ENCODE measurements at regions of chr1 and their contacts with region 1.

Region 1: DNA sequence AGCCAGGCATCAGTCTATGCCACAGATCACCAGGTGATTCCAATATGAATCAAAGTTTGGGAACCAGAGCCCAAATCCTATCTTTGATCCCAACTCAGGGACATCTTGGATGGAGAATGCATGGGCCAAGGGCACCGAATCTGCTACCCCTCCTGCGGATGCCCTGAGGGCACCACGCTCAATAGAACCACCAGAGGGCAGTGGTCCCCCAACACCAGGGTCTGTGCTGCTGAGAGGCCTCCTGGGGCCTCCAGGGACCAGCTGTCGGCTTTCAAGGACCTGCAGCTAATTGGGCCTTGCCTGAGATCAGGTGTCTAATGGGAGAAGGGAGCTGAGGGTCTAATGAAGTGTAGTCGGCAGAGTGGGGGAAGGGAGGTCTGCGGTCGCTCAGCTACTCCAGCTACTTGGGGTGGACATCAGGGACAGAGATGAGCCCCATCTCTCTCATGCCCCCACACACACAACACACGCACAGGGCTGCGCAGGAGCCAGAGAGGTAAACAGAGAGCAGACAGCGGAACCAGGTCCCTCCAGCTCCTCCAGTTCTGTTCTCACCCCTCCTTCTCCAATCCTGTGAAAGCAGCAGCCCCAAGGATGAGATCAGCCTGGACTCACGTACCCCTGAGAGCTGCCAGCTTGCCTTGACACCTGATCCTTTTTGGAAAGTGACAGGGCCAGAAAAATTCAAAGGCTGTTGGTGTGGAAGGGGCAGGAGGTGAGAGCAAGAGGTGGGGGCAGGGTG is 34.9 kb upstream of the PPP1R15B start:
- DNase-seq: peak; percentile 90
- ATAC-seq: peak; percentile 88
- H3K4me3 Mint-ChIP-seq: no peak overlapping the region
- H3K27ac Mint-ChIP-seq: peak overlapping the region; percentile 84
- H3K4me1 Mint-ChIP-seq: peaks cover 35% of the 10 kb centered on the region
- H3K27me3 Mint-ChIP-seq: no peaks in the 10 kb centered on the region
- CTCF ChIP-seq: peak; percentile 57

Region 2: DNA sequence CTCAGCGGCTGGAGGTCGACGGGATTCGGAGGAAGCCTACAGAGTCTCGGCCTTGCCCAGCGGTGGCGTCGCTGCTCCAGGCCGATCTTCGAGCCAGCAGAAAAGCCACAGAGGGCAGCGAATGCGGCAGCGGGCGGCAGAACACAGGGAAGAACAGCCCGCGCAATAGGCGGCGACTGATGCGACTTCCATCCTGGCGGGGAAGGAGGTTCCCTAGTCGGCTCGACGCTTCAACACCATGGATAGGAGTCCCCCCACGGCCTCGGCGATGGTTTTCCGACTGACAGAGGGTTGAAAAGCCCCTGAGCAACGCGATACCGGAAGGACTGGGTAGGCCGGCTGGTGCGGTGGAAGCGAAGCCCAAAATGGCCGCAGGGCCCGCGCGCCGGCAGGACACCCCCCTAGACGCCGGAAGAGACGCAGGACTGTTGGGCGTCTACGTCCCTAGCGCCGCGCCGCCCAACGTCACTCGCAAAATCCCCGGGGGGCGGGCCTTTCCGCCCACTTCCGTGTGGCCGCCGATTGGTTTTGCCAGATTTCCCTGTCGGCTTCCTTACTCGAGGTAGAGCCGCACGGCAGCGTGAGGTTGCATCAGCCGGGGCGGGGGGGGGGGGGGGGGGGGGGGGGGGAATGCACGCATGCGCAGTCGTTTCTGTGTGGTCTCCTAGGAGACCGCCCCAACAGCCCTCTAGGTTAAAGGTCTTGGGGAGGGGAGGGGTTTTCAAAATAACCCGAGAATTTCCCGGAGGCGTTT is 34.9 kb before region 1 on chr1 and contains the start of gene PPP1R15B:
- CTCF ChIA-PET with region 1: interaction called, 16 read pairs
- POLR2A ChIA-PET with region 1: no interaction called
- DNase-seq: peak; percentile 97
- ATAC-seq: peak; percentile 93
- H3K4me3 Mint-ChIP-seq: peak within 1 kb of the TSS; percentile 100
- H3K27ac Mint-ChIP-seq: peak within 1 kb of the TSS; percentile 100
- H3K4me1 Mint-ChIP-seq: peaks cover 12% of the 10 kb centered on the region
- H3K27me3 Mint-ChIP-seq: no peaks in the 10 kb centered on the region
- CTCF ChIP-seq: no peak
- total RNA-seq, gene PPP1R15B: 43.7 to 47.7 TPM (median 44.6 TPM) in 3 replicates

Region 3: GRCh38 chr1:204456826-204457442 is 10.4 kb after region 1 on chr1:
- CTCF ChIA-PET with region 1: interaction called, 114 read pairs
- POLR2A ChIA-PET with region 1: no interaction called
- DNase-seq: no peak
- ATAC-seq: no peak; the same call in 1 of the 2 replicates
- H3K4me3 Mint-ChIP-seq: no peak overlapping the region
- H3K27ac Mint-ChIP-seq: no peak overlapping the region
- H3K4me1 Mint-ChIP-seq: peaks cover 52% of the 10 kb centered on the region
- H3K27me3 Mint-ChIP-seq: no peaks in the 10 kb centered on the region
- CTCF ChIP-seq: no peak

Region 4: GRCh38 chr1:204487256-204487615 is 40.7 kb after region 1 on chr1:
- CTCF ChIA-PET with region 1: interaction called, 906 read pairs
- POLR2A ChIA-PET with region 1: interaction called, 27 read pairs
- DNase-seq: no peak
- ATAC-seq: no peak
- H3K4me3 Mint-ChIP-seq: no peak overlapping the region
- H3K27ac Mint-ChIP-seq: no peak overlapping the region
- H3K4me1 Mint-ChIP-seq: peaks cover 18% of the 10 kb centered on the region
- H3K27me3 Mint-ChIP-seq: no peaks in the 10 kb centered on the region; the same call in 1 of the 2 replicates
- CTCF ChIP-seq: no peak

Region 5: DNA sequence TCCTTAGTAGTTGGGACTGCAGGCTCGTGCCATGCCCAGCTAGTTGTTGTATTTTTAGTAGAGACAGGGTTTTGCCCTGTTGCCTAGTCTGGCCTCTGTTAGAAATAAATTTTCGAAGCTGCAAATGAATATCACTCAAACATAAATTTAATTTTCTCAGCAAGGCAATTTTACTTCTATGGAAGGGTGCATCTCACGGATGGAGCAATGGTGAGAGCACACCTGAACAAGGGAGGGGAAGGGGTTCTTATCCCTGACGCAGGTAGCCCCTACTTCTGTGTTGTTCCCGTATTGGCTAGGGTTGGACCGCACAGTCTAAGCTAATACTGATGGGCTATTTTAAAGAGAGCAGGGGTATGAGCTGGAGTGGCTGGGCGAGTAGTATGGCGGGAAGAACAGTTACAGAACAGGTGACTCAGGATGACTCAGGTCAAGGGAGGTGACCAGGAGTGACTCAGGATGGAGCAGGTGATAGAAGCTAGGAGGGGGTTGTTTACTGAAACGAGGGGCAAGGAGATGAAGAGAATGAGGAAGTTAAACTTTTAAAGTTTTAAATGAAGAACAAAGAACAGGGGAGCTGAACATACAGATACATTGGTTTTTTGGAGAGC is 77.2 kb after region 1 on chr1:
- CTCF ChIA-PET with region 1: interaction called, 10 read pairs
- POLR2A ChIA-PET with region 1: no interaction called
- DNase-seq: no peak
- ATAC-seq: no peak
- H3K4me3 Mint-ChIP-seq: no peak overlapping the region
- H3K27ac Mint-ChIP-seq: peak overlapping the region; percentile 48; the same call in 1 of the 2 replicates
- H3K4me1 Mint-ChIP-seq: peaks cover 15% of the 10 kb centered on the region
- H3K27me3 Mint-ChIP-seq: no peaks in the 10 kb centered on the region
- CTCF ChIP-seq: no peak

Measured in WTC11 (cell line).